ENCODE measurements at regions of chr16 and their contacts with region 1.

Region 1: GRCh38 chr16:4200000-4200780 is 41.7 kb downstream of the SRL start:
- DNase-seq: peak; percentile 81 to 86
- H3K4me3 ChIP-seq: no peak overlapping the region
- H3K27ac ChIP-seq: no peak overlapping the region
- H3K4me1 ChIP-seq: peaks cover 0 to 10% (median 4%) of the 10 kb centered on the region in 4 donors
- H3K27me3 ChIP-seq: no peaks in the 10 kb centered on the region
- CTCF ChIP-seq: peak in 5 of 7 experiments; percentile 53 to 77 (median 75)
- EP300 ChIP-seq: no peak
- POLR2A ChIP-seq: no peak

Region 2: DNA sequence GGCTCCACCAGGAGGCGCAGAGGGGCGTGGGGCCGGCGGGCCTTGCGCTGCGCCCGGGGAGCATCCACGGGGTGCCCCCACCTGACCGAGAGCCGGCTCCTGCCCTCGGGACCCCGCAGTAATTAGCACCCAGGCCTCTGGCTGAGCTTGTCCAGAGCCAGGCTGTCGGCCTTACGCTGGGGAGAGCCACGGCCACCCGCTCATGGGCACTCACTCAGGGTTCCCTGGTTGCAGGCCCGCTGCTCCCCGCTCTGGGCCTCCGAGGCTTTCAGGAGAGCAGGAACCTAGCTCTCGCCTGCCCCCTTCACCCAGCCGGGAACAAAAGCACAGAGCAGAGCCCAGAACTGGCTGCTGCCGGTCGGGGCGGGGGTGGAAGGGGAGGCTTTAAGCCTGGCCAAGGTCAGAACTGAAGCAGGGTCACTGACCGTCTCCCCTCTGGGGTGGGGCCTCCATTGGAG is 127.9 kb after region 1 on chr16:
- intact Hi-C with region 1: loop called (anchors 5 kb)
- DNase-seq: peak; percentile 83 to 95
- H3K4me3 ChIP-seq: peak overlapping the region; percentile 48 to 53 (median 50)
- H3K27ac ChIP-seq: peak overlapping the region; percentile 53 to 87 (median 79)
- H3K4me1 ChIP-seq: peaks cover 56 to 75% (median 67%) of the 10 kb centered on the region in 4 donors
- H3K27me3 ChIP-seq: peaks cover 0 to 8% (median 0%) of the 10 kb centered on the region in 3 donors
- CTCF ChIP-seq: peak in 5 of 7 experiments; percentile 26 to 57 (median 38)
- EP300 ChIP-seq: no peak
- POLR2A ChIP-seq: no peak

Region 3: DNA sequence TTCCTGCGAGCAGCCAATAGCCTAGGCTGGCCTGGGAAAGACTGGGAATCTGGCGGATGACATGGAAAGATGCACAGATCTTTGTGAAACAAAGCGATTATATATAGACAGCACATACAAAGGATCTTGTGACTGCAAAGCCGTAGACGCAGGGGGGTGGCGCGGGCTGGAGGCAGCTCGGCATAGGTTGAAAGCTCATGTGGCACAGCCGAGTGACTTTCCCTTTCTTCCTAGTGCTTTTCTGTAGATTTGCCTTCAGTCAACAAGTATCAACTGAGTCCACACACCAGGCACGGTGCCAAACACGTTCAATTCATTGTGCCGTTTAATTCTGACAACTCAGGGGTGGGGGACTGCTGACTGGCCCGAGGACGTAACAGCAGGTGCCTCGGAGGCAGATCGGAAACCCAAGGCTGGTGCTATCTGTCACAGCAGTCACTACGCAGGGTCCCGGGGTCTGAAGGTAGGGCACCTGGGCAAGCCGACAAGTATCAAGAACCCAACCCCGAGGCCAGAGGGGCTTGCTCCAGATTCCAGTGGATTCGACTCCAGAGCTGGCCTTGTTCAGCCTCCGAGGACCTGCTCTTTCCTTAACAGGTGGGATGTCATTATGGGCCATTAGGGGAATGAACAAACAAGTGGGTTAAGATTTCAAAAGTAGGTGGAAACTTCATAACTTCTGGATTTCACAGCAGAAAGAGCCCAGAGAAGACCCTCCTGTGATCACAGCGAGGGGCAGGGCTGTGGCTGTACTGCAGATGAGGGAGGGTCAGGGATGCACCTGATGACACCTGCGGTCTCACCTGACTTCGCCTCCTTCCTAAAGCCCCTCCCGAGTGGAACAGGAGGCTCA is 145.0 kb after region 1 on chr16:
- intact Hi-C with region 1: no loop called
- DNase-seq: peak; percentile 59 to 91
- H3K4me3 ChIP-seq: peak overlapping the region in 1 of 4 donors; percentile 11
- H3K27ac ChIP-seq: peak overlapping the region; percentile 5 to 72 (median 49)
- H3K4me1 ChIP-seq: peaks cover 18 to 72% (median 64%) of the 10 kb centered on the region in 4 donors
- H3K27me3 ChIP-seq: no peaks in the 10 kb centered on the region
- CTCF ChIP-seq: no peak
- EP300 ChIP-seq: no peak
- POLR2A ChIP-seq: no peak